Activated T-helper 1 cell treated with anti-CD3 and anti-CD28 coated beads, Interleukin-12 subunit alpha, Interleukin-12 subunit beta, Interleukin-2, Interleukin-4 antibody, amounts not matched to agents 30 ng/mL and 10 ng/mL and 1 ng/mL, durations not matched to agents 14 hours and 24 hours and 36 hours (primary cell): ENCODE measurements at regions of chr2 and their contacts with region 1.

Region 1: DNA sequence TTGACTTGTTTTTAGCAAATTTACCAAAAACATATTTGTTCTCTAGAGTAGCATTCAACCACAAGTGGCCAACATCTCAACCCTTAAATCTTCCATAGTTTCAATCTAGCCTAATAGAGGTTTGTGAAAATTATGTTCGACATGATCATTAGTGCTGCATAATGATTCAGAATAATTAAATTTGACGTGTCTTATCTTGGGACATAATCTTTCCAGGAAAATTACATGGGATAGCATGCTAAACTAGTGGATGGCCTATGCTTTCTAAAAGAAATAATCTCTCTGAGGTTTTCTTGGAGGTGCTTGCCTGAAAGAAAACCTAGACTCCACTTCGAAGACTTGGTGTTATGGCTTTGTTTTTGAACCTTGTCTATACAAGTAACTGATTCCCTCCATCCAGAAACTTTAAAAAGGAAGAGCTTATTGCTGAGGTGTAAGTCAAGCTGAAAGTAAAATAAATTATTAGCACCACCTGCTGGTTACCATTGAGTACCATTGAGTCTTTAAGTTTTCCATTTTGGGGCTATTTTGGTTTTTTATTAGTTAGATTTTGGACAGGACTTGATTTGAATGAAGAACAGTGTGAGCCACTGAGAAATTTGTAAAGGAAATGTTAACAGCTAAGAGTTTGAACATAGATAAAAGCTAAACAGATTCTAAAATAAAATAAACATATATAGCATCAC is 32.7 kb downstream of the COX7A2L start:
- DNase-seq: no peak
- H3K4me3 Mint-ChIP-seq: no peak overlapping the region
- H3K27ac Mint-ChIP-seq: peak overlapping the region; percentile 40
- H3K4me1 Mint-ChIP-seq: peaks cover 28% of the 10 kb centered on the region
- H3K27me3 Mint-ChIP-seq: no peaks in the 10 kb centered on the region

Region 2: DNA sequence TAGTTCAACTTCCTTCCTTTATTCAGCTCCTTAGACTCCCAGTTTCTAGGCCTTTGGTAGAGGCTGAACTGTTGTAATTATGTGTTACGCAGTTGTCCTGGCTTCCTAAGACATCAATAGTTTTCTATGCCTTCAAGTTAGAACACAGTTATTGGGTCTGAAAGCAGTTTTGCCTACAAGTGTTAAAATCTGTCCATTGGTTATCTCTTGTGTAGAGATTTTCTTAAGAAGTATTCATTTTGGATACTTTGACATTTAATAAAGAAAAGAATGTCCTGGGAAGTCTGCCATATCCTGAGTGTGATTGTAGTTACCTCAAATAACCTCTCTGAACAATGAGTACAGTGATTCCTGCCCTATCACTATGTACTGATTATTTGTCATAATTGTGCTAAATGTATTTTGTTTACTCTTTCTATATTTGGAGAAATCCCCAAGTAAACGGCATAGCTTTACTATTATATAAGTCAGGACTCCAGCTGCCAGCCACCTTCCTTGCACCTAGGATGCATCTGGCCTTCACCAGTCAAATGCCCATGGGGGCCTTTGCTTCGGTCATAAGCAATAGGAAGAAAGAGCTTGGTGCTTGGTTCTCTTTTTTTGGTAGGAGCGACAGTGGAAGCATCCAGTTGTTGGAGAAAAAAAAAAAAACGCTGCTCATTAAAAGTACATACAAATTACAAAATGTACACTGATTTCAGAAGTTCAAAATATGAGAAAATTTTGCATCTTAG is 730.0 kb before region 1 on chr2:
- intact Hi-C with region 1: no loop called
- DNase-seq: no peak
- H3K4me3 Mint-ChIP-seq: no peak overlapping the region
- H3K27ac Mint-ChIP-seq: no peak overlapping the region
- H3K4me1 Mint-ChIP-seq: no peaks in the 10 kb centered on the region
- H3K27me3 Mint-ChIP-seq: no peaks in the 10 kb centered on the region

Region 3: GRCh38 chr2:42286268-42286946 is 41.9 kb before region 1 on chr2:
- intact Hi-C with region 1: loop called (anchors 5 kb)
- DNase-seq: no peak
- H3K4me3 Mint-ChIP-seq: no peak overlapping the region
- H3K27ac Mint-ChIP-seq: no peak overlapping the region
- H3K4me1 Mint-ChIP-seq: peaks cover 36% of the 10 kb centered on the region
- H3K27me3 Mint-ChIP-seq: no peaks in the 10 kb centered on the region

Region 4: GRCh38 chr2:42435641-42436040 is 107.3 kb after region 1 on chr2:
- intact Hi-C with region 1: no loop called
- DNase-seq: no peak
- H3K4me3 Mint-ChIP-seq: no peak overlapping the region
- H3K27ac Mint-ChIP-seq: no peak overlapping the region
- H3K4me1 Mint-ChIP-seq: no peaks in the 10 kb centered on the region
- H3K27me3 Mint-ChIP-seq: peaks cover 16% of the 10 kb centered on the region